Mucosa of descending colon (tissue), 3 donors: ENCODE measurements at regions of chr12 and their contacts with region 1.

Region 1: GRCh38 chr12:124318295-124319020 is 23.6 kb downstream of the RFLNA start:
- DNase-seq: peak in 1 of 3 donors; percentile 16
- ATAC-seq: no peak
- H3K4me3 ChIP-seq: no peak overlapping the region
- H3K4me1 ChIP-seq: no peaks in the 10 kb centered on the region
- CTCF ChIP-seq: no peak

Region 2: DNA sequence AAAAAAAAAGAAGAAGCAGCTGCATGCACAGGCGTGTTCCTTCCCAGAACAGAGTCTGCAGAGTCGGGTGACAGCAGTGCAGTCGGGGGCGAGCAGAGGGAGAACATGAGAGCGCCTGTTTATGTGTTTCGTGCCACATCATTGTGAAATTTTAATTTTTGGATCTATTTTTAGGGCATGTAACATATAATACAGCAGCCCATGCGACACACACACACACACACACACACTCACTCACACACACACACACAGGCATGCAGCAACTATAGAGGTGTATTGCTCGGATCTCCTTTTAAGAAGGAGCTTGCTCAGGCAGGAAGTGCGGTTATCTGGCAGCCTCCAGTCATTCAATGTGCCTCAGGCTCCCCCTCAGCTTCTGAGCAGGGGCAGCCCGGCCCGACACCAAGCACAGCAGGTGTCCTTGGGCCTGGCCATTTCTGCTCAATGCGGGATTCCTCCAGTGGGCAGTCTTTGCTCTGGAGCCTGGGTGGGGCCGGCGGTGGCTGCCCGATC is 273.6 kb before region 1 on chr12:
- intact Hi-C with region 1: loop called (anchors 5 to 10 kb)
- DNase-seq: no peak
- ATAC-seq: no peak
- H3K4me3 ChIP-seq: no peak overlapping the region
- H3K4me1 ChIP-seq: no peaks in the 10 kb centered on the region
- CTCF ChIP-seq: no peak

Region 3: GRCh38 chr12:124388679-124389536 is 70.5 kb after region 1 on chr12:
- intact Hi-C with region 1: no loop called
- DNase-seq: peak; percentile 84 to 90 (median 90)
- ATAC-seq: peak; percentile 75
- H3K4me3 ChIP-seq: no peak overlapping the region
- H3K4me1 ChIP-seq: peaks cover 45% of the 10 kb centered on the region
- CTCF ChIP-seq: no peak